MCF 10A (cell line): ENCODE measurements at regions of chr6 and their contacts with region 1.

Region 1: GRCh38 chr6:124961777-124962611 is at the start of gene RNF217:
- DNase-seq: peak; percentile 49
- H3K4me3 Mint-ChIP-seq: peak within 1 kb of the TSS; percentile 81
- H3K27ac Mint-ChIP-seq: peak within 1 kb of the TSS; percentile 86
- H3K4me1 Mint-ChIP-seq: peaks cover 37% of the 10 kb centered on the region
- H3K27me3 Mint-ChIP-seq: no peaks in the 10 kb centered on the region
- CTCF ChIP-seq: no peak
- total RNA-seq, gene RNF217: 22.8 and 24.8 TPM in 2 replicates

Region 2: DNA sequence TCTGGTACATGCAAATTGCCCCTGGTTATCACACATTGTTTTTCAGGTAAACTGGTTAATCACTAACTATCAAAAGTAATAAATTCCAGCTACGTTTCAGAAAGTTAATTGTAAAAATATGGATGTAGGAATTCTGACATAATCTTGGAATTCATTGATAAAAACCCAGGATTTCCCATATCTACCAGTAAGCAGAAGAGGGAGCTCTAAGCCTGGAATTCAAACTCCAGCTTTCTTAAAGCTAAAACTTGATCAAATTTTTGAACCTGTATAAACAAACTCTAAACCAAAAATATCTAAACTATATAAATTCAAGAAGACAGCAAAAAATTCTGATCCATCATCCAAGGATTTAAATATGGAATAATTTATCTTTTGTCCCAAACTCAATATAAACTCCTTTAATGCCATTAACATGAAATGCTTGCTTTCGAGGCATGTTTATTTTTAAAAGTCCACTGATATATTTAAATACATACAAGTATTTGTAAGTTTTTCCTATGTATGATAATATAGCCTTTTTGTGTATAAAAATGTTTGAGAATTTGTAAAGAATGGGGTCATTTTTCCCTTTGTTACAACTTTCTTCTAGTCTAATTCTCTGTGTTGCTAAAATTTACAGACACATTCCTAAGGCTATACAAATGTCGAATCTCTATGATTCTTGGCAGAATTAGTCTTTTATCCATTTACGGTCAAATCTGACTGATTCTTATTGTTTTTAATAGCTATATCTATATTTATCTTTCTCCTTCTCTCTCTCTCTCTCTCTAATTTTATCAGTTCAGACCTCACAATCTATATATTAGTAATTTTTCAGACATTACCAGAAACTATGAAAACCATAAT is 91.2 kb before region 1 on chr6:
- CTCF ChIA-PET with region 1: no interaction called
- POLR2A ChIA-PET with region 1: interaction called, 4 read pairs
- intact Hi-C with region 1: loop called (anchors 1 kb)
- DNase-seq: peak; percentile 57
- H3K4me3 Mint-ChIP-seq: no peak overlapping the region
- H3K27ac Mint-ChIP-seq: no peak overlapping the region
- H3K4me1 Mint-ChIP-seq: no peaks in the 10 kb centered on the region
- H3K27me3 Mint-ChIP-seq: no peaks in the 10 kb centered on the region
- CTCF ChIP-seq: peak; percentile 77

Region 3: GRCh38 chr6:124977067-124977908 is 15.3 kb after region 1 on chr6:
- CTCF ChIA-PET with region 1: interaction called, 6 read pairs
- POLR2A ChIA-PET with region 1: interaction called, 26 read pairs
- intact Hi-C with region 1: no loop called
- DNase-seq: no peak
- H3K4me3 Mint-ChIP-seq: no peak overlapping the region
- H3K27ac Mint-ChIP-seq: peak overlapping the region; percentile 80
- H3K4me1 Mint-ChIP-seq: peaks cover 23% of the 10 kb centered on the region
- H3K27me3 Mint-ChIP-seq: no peaks in the 10 kb centered on the region
- CTCF ChIP-seq: no peak

Region 4: DNA sequence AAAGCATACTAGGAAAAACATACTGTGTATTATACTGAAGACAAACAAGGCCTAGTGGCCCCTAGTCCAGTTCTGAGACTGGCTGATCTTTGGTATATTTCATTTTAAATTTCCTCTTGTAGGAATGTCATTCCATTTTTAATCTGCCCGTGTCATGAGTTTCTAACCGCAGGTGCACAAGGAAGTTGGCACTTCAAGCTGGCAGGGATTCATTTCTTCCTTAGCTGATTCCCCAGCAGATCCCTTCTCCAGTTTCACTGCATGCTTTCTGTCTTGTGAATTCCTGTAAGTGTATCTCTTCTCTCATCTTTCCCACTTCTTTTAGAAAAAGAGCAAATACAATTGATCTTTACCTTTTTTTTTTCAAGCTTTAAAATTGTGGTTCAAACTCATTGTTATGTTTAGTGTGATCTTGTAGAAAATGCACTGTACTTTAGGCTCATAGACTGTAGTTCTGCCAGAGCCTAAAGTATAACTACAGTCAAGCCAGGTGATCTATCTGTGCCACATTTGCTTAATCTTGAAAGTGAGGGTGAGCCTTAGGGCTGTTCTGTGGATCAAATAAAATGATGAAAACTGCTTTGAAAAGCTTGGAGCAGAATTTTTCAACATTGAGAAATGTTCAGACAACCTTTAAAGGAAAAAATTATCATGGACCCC is 37.2 kb after region 1 on chr6:
- CTCF ChIA-PET with region 1: interaction called, 4 read pairs
- POLR2A ChIA-PET with region 1: interaction called, 20 read pairs
- intact Hi-C with region 1: no loop called
- DNase-seq: peak; percentile 58
- H3K4me3 Mint-ChIP-seq: no peak overlapping the region
- H3K27ac Mint-ChIP-seq: peak overlapping the region; percentile 7
- H3K4me1 Mint-ChIP-seq: peaks cover 41% of the 10 kb centered on the region
- H3K27me3 Mint-ChIP-seq: no peaks in the 10 kb centered on the region
- CTCF ChIP-seq: no peak

Region 5: DNA sequence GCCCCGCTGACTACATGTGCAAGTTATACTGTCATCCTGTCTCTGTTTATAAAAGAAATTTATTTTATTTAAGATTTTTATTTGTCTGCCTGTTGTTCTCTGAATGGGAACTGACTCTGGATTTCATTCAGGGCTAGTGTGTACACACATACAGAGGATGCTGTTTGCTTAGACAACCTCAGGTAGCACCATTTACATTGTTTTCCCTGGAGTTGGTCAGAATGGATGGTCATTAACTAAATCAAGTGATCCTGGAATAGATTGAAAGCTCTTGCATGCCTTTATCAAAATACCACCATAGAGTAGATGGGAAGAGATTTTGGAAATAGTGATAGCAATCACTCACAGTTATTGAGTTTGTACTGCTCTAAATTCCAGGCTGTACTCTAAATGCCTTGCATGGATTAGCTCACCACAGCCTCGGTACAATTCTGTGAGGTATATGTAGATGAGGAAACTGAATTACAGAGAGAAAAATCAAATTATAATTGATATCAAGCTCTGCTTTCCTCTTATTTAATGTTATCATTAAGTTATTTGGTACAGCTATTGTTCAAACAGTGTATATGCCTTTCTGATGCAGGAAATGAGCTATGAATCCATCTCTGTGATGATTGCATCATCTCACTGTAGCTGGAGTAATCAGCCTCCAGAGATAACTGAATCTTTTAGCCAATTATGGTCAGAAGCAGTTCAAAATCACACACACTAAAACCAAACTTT is 52.1 kb after region 1 on chr6:
- CTCF ChIA-PET with region 1: interaction called, 3 read pairs
- POLR2A ChIA-PET with region 1: interaction called, 20 read pairs
- intact Hi-C with region 1: no loop called
- DNase-seq: peak; percentile 60
- H3K4me3 Mint-ChIP-seq: no peak overlapping the region
- H3K27ac Mint-ChIP-seq: peak overlapping the region; percentile 2
- H3K4me1 Mint-ChIP-seq: peaks cover 28% of the 10 kb centered on the region
- H3K27me3 Mint-ChIP-seq: no peaks in the 10 kb centered on the region
- CTCF ChIP-seq: no peak

Region 6: DNA sequence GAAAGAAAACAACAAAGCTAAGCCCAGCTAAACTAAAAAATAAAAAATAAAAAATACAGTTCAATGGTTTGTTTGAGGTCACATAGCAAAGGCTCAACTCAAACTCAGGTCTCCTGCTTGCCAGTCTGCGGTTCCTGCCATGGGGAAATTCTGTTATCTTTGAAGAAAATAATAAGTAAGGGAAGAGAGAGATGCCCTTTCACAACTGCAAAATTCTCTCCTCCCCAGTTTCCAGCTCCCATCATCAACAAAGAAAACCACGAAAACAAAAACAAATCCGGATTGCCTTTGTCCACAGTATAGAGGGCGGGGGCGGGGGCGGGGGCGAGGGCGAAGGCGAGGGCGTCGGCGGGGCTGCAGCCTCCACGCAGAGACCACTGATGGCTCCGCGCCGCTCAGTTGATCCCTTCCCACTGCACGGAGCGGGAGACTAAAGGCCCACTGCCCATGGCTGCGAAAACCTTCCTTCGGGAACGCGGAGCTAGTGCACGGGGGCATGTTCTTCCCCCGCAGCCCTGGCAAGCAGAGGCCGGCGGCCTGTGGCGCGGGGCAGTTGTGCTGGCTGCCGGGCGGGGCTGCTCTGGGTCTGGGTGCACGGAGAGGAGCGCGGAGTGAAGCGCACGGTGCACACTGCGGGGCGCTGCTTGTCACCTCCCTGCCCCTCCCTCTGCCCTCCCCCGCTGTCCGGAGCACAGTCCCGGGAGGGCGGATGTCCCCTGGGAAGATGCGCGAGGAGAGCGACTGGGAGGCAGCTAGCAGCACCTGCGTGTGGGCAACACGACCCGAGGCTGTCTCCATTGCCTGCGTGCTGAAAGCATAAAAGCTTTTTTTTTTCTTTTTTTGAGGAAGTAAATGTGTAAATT is 137.4 kb after region 1 on chr6:
- CTCF ChIA-PET with region 1: interaction called, 11 read pairs
- POLR2A ChIA-PET with region 1: interaction called, 18 read pairs
- intact Hi-C with region 1: no loop called
- DNase-seq: peak; percentile 59
- H3K4me3 Mint-ChIP-seq: peak overlapping the region; percentile 69
- H3K27ac Mint-ChIP-seq: peak overlapping the region; percentile 14
- H3K4me1 Mint-ChIP-seq: peaks cover 37% of the 10 kb centered on the region
- H3K27me3 Mint-ChIP-seq: no peaks in the 10 kb centered on the region
- CTCF ChIP-seq: no peak